Calu3 (cell line): ENCODE measurements at regions of chr6 and their contacts with region 1.

Region 1: GRCh38 chr6:165605901-165606664 is 57.0 kb downstream of the PDE10A start:
- DNase-seq: peak; percentile 54
- H3K4me3 Mint-ChIP-seq: no peak overlapping the region
- H3K27ac Mint-ChIP-seq: no peak overlapping the region
- H3K4me1 Mint-ChIP-seq: peaks cover 16% of the 10 kb centered on the region
- H3K27me3 Mint-ChIP-seq: no peaks in the 10 kb centered on the region
- CTCF ChIP-seq: no peak

Region 2: GRCh38 chr6:165573671-165574070 is 32.4 kb before region 1 on chr6:
- CTCF ChIA-PET with region 1: interaction called, 3 read pairs
- intact Hi-C with region 1: loop called (anchors 2 kb)
- DNase-seq: peak; percentile 71
- H3K4me3 Mint-ChIP-seq: no peak overlapping the region
- H3K27ac Mint-ChIP-seq: no peak overlapping the region
- H3K4me1 Mint-ChIP-seq: peaks cover 41% of the 10 kb centered on the region
- H3K27me3 Mint-ChIP-seq: no peaks in the 10 kb centered on the region
- CTCF ChIP-seq: no peak

Region 3: DNA sequence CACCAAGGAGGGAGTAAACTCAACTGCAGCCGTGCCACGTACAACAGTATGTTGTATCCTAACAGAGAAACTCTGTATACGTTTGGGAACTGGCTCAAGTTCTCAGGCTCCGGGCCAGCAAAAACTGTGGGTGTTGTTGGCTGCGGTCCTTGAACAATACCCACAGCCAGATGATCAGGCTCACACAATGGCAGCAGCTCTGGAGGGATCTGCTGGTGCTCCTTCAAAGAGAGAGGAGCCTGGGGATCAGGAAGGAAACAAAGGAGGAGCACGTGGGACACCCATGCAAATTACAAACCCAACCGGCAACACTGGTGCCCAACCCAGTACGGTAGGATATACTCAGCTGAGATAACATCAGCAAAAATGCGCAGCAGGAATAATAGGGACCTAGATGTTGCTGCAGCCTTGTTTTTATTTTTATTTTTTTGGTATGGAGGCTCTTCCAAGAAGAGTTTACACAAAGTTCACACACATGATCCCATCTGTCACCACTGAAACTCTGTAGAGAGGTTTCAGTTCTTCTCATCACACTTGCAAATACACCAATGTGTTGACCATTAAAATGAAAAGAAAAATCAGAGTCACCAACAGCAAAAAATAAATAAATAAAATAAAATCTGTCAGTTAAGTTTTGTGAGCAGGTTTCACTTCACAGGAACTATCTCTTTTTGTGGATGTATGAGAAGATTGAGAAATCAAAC is 98.1 kb after region 1 on chr6:
- CTCF ChIA-PET with region 1: no interaction called
- intact Hi-C with region 1: no loop called
- DNase-seq: no peak
- H3K4me3 Mint-ChIP-seq: no peak overlapping the region
- H3K27ac Mint-ChIP-seq: no peak overlapping the region
- H3K4me1 Mint-ChIP-seq: peaks cover 28% of the 10 kb centered on the region
- H3K27me3 Mint-ChIP-seq: no peaks in the 10 kb centered on the region
- CTCF ChIP-seq: no peak